ENCODE measurements at regions of chr21 and their contacts with region 1.

Region 1: DNA sequence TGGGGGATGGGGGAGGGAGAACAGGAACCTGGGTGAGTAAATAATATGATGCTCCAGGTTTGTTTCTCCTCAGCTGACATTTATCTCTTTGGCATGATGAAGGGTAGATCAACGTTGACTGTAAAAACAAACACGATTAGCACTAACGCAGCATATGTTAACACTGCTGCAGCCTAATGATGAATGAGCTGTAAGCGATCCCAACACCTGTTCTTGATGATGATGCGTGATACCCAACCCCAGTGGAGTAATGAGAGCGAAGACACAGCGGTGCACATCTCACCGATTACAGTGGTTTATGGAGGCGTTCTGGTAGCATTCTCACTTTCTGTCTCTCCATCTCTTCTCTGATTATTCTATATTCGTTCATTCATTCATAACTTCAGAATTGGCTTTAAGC is 640.4 kb downstream of the USP25 start:
- DNase-seq: no peak
- H3K4me3 ChIP-seq: no peak overlapping the region
- H3K27ac ChIP-seq: no peak overlapping the region
- H3K4me1 ChIP-seq: no peaks in the 10 kb centered on the region
- H3K27me3 ChIP-seq: no peaks in the 10 kb centered on the region
- CTCF ChIP-seq: no peak
- POLR2A ChIP-seq: no peak

Region 2: GRCh38 chr21:15549675-15550074 is 820.5 kb before region 1 on chr21:
- intact Hi-C with region 1: loop called (anchors 5 kb)
- DNase-seq: no peak
- H3K4me3 ChIP-seq: no peak overlapping the region
- H3K27ac ChIP-seq: no peak overlapping the region
- H3K4me1 ChIP-seq: no peaks in the 10 kb centered on the region
- H3K27me3 ChIP-seq: no peaks in the 10 kb centered on the region
- CTCF ChIP-seq: no peak
- POLR2A ChIP-seq: no peak

Region 3: DNA sequence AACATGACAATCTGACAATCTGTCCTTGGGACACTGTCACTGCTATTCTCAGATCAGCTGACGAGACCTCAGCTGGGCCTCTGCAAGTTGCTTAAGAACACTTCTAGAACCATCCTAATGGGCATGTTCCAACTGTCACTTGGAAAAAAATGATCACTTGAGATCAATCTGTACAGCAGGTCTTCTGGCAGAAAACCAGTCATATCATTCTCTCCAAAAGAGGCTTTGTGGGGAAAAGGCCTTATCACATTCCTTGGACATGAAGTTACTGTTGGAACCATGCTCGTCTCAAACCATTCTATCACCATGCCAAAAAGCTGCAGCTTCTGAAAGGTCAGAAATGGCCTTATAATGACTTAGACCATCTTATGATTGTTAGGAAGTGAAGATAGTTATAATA is 103.8 kb after region 1 on chr21:
- intact Hi-C with region 1: no loop called
- DNase-seq: no peak
- H3K4me3 ChIP-seq: no peak overlapping the region
- H3K27ac ChIP-seq: peak overlapping the region in 1 of 2 donors; percentile 33
- H3K4me1 ChIP-seq: no peaks in the 10 kb centered on the region
- H3K27me3 ChIP-seq: no peaks in the 10 kb centered on the region
- CTCF ChIP-seq: no peak
- POLR2A ChIP-seq: no peak

Measured in breast epithelium (tissue), 4 donors.